ENCODE measurements at regions of chr15 and their contacts with region 1.

Region 1: DNA sequence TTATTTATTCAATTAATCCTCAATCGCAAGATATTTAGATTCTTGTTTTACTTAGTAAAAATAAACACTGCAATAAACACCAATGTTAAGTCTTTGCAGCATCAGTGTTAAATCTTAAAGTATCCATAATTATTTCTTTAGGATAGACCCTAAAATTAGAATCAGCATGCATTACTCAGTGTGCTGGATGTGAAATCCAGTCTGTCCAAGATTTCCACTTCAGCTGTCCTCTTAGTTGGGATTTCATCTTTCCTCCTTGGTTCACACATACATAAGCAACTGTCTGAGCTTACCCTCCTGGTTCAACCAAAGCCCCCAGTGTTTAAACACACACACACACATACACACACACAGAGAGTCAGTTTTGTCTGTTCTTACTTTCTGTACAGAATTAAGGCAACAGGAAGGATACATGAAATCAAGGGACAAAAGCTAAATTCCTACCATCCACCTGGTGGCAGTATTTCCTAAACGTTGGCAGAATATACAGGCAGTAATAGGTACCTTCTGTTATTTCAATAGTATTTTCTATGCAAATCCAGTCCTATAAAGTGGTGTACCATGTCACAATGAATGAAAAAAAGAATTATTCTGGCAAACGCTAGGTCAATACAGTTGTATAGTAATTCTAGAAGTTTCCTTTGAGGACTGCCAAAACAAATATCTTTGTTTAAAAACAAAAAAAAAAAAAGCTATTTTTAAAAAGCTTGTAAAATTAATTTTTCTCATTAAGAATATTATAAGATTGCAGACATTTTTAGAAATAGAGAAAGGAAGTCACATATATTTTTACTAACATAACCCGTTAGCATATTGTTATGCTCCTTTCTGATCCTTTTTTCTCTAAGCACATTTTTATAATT is 27.3 kb upstream of the DMXL2 start:
- DNase-seq: peak; percentile 44
- ATAC-seq: peak; percentile 74
- H3K4me3 Mint-ChIP-seq: no peak overlapping the region
- H3K27ac Mint-ChIP-seq: no peak overlapping the region
- H3K4me1 Mint-ChIP-seq: no peaks in the 10 kb centered on the region
- H3K27me3 Mint-ChIP-seq: no peaks in the 10 kb centered on the region

Region 2: GRCh38 chr15:51589867-51590542 is 59.9 kb before region 1 on chr15:
- CTCF ChIA-PET with region 1: no interaction called
- POLR2A ChIA-PET with region 1: no interaction called
- intact Hi-C with region 1: no loop called
- DNase-seq: no peak
- ATAC-seq: no peak
- H3K4me3 Mint-ChIP-seq: no peak overlapping the region
- H3K27ac Mint-ChIP-seq: no peak overlapping the region
- H3K4me1 Mint-ChIP-seq: no peaks in the 10 kb centered on the region
- H3K27me3 Mint-ChIP-seq: peaks cover 1% of the 10 kb centered on the region

Region 3: GRCh38 chr15:51726351-51727073 is 76.6 kb after region 1 on chr15:
- CTCF ChIA-PET with region 1: interaction called, 12 read pairs
- POLR2A ChIA-PET with region 1: no interaction called
- intact Hi-C with region 1: no loop called
- DNase-seq: peak; percentile 70
- ATAC-seq: peak; percentile 97
- H3K4me3 Mint-ChIP-seq: no peak overlapping the region
- H3K27ac Mint-ChIP-seq: peak overlapping the region; percentile 64
- H3K4me1 Mint-ChIP-seq: peaks cover 58% of the 10 kb centered on the region
- H3K27me3 Mint-ChIP-seq: no peaks in the 10 kb centered on the region

Region 4: DNA sequence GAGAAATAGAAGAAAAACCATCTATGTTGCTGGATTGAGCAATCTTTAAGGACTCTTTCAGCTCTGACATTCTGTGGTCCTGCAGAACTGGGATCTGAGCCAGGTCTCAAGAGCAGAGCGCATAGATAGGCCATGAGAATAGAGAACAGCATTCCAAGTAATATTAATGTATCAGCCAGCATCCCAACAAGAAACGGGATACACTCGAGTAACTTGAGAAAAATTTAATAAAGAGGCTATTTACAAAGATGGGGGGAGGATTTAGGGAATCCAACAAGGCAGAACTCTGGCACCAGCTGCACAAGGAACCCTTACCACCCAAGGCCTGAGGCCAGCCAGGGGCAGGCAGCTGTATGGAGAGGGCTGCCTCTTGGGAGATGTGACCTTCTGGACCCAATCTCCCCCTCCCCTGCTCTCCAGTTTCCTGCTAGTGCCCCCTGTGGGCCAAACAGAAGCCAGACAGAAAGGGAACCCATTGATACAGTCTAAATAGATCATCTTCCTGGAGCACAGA is 109.7 kb after region 1 on chr15:
- CTCF ChIA-PET with region 1: interaction called, 22 read pairs
- POLR2A ChIA-PET with region 1: no interaction called
- intact Hi-C with region 1: no loop called
- DNase-seq: peak; percentile 28
- ATAC-seq: no peak
- H3K4me3 Mint-ChIP-seq: no peak overlapping the region
- H3K27ac Mint-ChIP-seq: no peak overlapping the region
- H3K4me1 Mint-ChIP-seq: no peaks in the 10 kb centered on the region
- H3K27me3 Mint-ChIP-seq: no peaks in the 10 kb centered on the region

Region 5: DNA sequence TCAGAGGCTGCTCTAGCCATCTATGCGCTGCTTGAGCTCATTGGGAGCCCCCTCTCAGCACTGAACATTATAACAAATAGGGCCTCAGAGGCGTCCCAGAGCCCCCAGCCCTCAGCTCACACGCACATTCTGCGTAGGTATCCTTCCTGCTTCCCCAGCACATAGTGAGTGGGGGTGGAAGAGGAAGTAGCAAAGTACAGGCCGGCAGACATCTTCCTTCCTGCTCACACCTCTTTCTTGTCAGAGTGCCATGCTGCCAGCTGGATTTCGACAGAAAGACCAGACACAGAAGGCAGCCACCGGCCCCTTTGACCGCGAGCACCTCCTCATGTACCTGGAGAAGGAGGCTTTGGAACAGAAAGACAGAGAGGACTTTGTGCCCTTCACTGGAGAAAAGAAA is 118.1 kb after region 1 on chr15:
- CTCF ChIA-PET with region 1: interaction called, 12 read pairs
- POLR2A ChIA-PET with region 1: interaction called, 3 read pairs
- intact Hi-C with region 1: no loop called
- DNase-seq: peak; percentile 15
- ATAC-seq: no peak
- H3K4me3 Mint-ChIP-seq: no peak overlapping the region
- H3K27ac Mint-ChIP-seq: peak overlapping the region; percentile 53
- H3K4me1 Mint-ChIP-seq: peaks cover 8% of the 10 kb centered on the region
- H3K27me3 Mint-ChIP-seq: no peaks in the 10 kb centered on the region

Region 6: GRCh38 chr15:51782357-51782896 is 132.5 kb after region 1 on chr15:
- CTCF ChIA-PET with region 1: interaction called, 285 read pairs
- POLR2A ChIA-PET with region 1: interaction called, 9 read pairs
- intact Hi-C with region 1: no loop called
- DNase-seq: no peak
- ATAC-seq: no peak
- H3K4me3 Mint-ChIP-seq: no peak overlapping the region
- H3K27ac Mint-ChIP-seq: no peak overlapping the region
- H3K4me1 Mint-ChIP-seq: peaks cover 3% of the 10 kb centered on the region
- H3K27me3 Mint-ChIP-seq: no peaks in the 10 kb centered on the region

Region 7: GRCh38 chr15:51888593-51889195 is 238.8 kb after region 1 on chr15:
- CTCF ChIA-PET with region 1: no interaction called
- POLR2A ChIA-PET with region 1: no interaction called
- intact Hi-C with region 1: loop called in 1 of 2 experiments (anchors 10 kb)
- DNase-seq: no peak
- ATAC-seq: no peak
- H3K4me3 Mint-ChIP-seq: no peak overlapping the region
- H3K27ac Mint-ChIP-seq: no peak overlapping the region
- H3K4me1 Mint-ChIP-seq: peaks cover 7% of the 10 kb centered on the region
- H3K27me3 Mint-ChIP-seq: no peaks in the 10 kb centered on the region

Region 8: DNA sequence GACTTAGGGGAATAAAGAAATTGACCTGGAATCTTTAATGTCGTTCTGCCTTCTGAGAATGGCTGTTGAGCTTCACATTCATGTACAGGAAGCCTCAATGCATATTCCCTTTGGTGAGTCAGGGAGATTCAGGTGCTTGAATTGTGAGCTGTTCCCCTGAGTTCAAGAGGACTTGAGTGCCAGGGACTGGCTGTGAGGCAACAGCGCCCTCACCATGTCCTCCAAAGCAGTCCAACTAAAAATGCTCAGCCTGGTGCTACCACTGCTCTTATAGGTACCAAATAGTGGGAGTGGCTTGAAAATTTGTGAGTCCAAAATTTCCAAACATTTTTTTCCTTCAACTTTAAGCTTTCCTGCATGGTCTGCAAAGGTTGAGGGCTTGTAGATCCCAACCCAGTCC is 267.6 kb after region 1 on chr15:
- CTCF ChIA-PET with region 1: interaction called, 3 read pairs
- POLR2A ChIA-PET with region 1: no interaction called
- intact Hi-C with region 1: loop called in 1 of 2 experiments (anchors 10 kb)
- DNase-seq: peak; percentile 39
- ATAC-seq: peak; percentile 73
- H3K4me3 Mint-ChIP-seq: no peak overlapping the region
- H3K27ac Mint-ChIP-seq: no peak overlapping the region
- H3K4me1 Mint-ChIP-seq: no peaks in the 10 kb centered on the region
- H3K27me3 Mint-ChIP-seq: no peaks in the 10 kb centered on the region

Region 9: DNA sequence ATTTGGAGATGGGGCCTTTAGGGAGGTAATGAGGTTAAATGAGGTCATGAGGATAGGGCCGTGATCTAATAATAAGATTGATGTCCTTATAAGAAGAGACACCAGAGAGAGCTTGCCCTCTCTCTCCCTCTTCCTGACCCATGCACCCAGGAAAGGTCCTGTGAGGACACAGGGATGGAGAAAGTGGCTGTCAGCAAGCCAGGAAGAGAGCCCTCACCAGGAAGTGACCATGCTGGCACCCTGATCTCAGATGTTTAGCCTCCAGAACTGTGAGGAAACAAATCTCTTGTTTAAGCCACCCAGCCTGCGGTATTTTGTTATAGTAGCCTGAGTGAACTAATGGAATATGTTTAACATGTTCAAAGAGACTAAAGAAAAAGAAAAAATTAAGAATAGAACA is 556.6 kb after region 1 on chr15:
- CTCF ChIA-PET with region 1: no interaction called
- POLR2A ChIA-PET with region 1: no interaction called
- intact Hi-C with region 1: no loop called
- DNase-seq: no peak
- ATAC-seq: no peak
- H3K4me3 Mint-ChIP-seq: no peak overlapping the region
- H3K27ac Mint-ChIP-seq: no peak overlapping the region
- H3K4me1 Mint-ChIP-seq: no peaks in the 10 kb centered on the region
- H3K27me3 Mint-ChIP-seq: no peaks in the 10 kb centered on the region